ENCODE measurements at regions of chr19 and their contacts with region 1.

Region 1: GRCh38 chr19:17572640-17573039 is 17.2 kb downstream of the COLGALT1 start:
- DNase-seq: no peak
- H3K4me3 ChIP-seq: no peak overlapping the region
- H3K27ac ChIP-seq: no peak overlapping the region
- H3K4me1 ChIP-seq: peaks cover 0 to 5% (median 2%) of the 10 kb centered on the region in 4 donors
- H3K27me3 ChIP-seq: no peaks in the 10 kb centered on the region
- CTCF ChIP-seq: no peak
- EP300 ChIP-seq: no peak
- POLR2A ChIP-seq: no peak

Region 2: GRCh38 chr19:17390665-17391370 is 181.8 kb before region 1 on chr19:
- intact Hi-C with region 1: no loop called
- DNase-seq: peak; percentile 94
- H3K4me3 ChIP-seq: peak overlapping the region; percentile 27 to 53 (median 40)
- H3K27ac ChIP-seq: peak overlapping the region in 1 of 4 donors; percentile 38
- H3K4me1 ChIP-seq: peaks cover 0 to 23% (median 18%) of the 10 kb centered on the region in 4 donors
- H3K27me3 ChIP-seq: peaks cover 0 to 28% (median 10%) of the 10 kb centered on the region in 3 donors
- CTCF ChIP-seq: peak; percentile 23 to 73 (median 38)
- EP300 ChIP-seq: no peak
- POLR2A ChIP-seq: no peak

Region 3: DNA sequence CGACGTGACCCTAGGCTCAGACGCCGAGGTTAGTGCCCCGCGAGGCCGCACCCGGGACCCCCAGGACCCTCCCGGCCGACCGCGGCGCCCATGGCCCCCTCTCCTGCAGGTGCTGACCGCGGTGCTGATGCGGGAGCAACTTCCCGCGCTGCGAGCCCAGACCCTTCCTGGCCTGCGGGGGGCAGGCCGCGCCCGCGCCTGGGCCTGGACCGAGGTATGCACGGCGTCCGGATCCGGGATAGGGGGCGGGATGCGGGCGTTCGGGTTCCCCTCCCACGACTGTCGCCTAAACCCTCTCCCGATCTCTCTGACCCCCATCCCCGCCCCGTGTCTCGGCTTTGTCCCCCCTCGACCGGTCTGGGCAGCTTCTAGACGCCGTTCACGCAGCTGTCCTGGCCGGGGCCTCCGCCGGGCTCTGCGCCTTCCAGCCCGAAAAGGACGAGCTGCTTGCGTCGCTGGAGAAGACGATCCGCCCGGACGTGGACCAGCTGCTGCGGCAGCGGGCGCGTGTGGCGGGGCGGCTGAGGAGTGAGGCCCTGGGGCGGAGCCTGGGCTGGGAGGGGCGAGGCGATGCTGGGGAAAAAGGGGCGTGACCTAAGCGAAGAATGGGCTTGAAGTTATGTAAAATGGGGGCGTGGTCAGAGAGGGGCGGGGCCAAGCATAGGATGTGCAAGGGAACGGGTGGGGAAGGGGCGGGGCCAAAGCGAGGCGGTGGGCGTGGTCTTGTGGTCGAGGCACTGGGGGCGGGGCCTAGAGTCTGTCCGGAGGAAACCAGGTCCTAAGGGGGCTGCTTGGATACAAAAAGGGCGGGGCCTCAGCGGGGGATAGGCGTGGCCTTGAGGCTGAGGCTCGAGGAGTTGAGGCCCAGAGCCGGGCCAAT is 33.2 kb before region 1 on chr19:
- intact Hi-C with region 1: loop called (anchors 1 kb)
- DNase-seq: peak; percentile 98
- H3K4me3 ChIP-seq: peak overlapping the region; percentile 23 to 51 (median 49)
- H3K27ac ChIP-seq: peak overlapping the region; percentile 50 to 70 (median 54)
- H3K4me1 ChIP-seq: peaks cover 0 to 16% (median 13%) of the 10 kb centered on the region in 4 donors
- H3K27me3 ChIP-seq: no peaks in the 10 kb centered on the region
- CTCF ChIP-seq: peak in 2 of 4 experiments; percentile 16 to 34
- EP300 ChIP-seq: no peak
- POLR2A ChIP-seq: no peak